Stomach (tissue), 19 donors: ENCODE measurements at regions of chr11 and their contacts with region 1.

Region 1: GRCh38 chr11:47443042-47443700 is 5.8 kb downstream of the RAPSN start:
- DNase-seq: no peak
- H3K4me3 ChIP-seq: no peak overlapping the region
- H3K27ac ChIP-seq: no peak overlapping the region
- H3K4me1 ChIP-seq: peaks cover 0 to under 1% (median under 1%) of the 10 kb centered on the region in 4 donors
- H3K27me3 ChIP-seq: no peaks in the 10 kb centered on the region
- CTCF ChIP-seq: no peak
- EP300 ChIP-seq: no peak
- POLR2A ChIP-seq: no peak

Region 2: GRCh38 chr11:47340980-47341775 is 102.0 kb before region 1 on chr11:
- intact Hi-C with region 1: no loop called
- DNase-seq: no peak
- H3K4me3 ChIP-seq: no peak overlapping the region
- H3K27ac ChIP-seq: no peak overlapping the region
- H3K4me1 ChIP-seq: no peaks in the 10 kb centered on the region
- H3K27me3 ChIP-seq: no peaks in the 10 kb centered on the region
- CTCF ChIP-seq: no peak
- EP300 ChIP-seq: no peak
- POLR2A ChIP-seq: no peak

Region 3: GRCh38 chr11:47373876-47374720 is 69.1 kb before region 1 on chr11:
- intact Hi-C with region 1: loop called (anchors 10 kb)
- DNase-seq: peak; percentile 87 to 90
- H3K4me3 ChIP-seq: peak overlapping the region in 2 of 4 donors; percentile 37 to 41
- H3K27ac ChIP-seq: peak overlapping the region in 3 of 5 donors; percentile 15 to 87 (median 39)
- H3K4me1 ChIP-seq: peaks cover 0 to 16% (median 0%) of the 10 kb centered on the region in 4 donors
- H3K27me3 ChIP-seq: no peaks in the 10 kb centered on the region
- CTCF ChIP-seq: peak in 5 of 7 experiments; percentile 80 to 96 (median 90)
- EP300 ChIP-seq: no peak
- POLR2A ChIP-seq: no peak